ENCODE measurements at regions of chr6 and their contacts with region 1.

Region 1: DNA sequence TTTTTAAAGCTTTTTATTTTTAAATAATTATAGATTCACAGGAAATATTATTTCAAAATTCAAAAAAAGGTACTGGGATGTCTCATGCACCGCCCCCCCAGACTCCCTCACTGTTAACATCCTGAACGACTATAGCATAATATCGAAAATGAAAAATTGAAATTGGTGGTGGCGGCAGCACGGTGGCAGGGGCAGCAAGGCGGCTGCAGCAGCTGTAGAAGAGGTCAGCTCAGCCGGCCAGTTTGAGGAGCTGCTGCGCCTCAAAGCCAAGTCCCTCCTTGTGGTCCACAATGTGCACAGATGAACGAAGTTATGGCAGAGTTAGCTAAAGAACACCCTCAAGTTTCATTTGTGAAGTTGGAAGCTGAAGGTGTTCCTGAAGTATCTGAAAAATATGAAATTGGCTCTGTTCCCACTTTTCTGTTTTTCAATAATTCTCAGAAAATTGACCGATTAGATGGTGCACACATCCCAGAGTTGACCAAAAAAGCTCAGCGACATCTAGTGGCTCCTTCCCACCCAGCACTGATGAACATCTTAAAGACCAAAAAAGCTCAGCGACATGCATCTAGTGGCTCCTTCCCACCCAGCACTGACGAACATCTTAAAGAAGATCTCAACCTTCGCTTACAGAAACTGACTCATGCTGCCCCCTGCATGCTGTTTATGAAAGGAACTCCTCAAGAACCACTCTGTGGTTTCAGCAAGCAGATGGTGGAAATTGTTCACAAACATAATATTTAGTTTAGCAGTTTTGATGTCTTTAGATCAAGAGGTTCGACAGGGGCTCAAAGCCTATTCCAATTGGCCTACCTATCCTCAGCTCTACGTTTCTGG is 100.8 kb downstream of the FAM217A start:
- DNase-seq: peak; percentile 64
- H3K4me3 Mint-ChIP-seq: no peak overlapping the region
- H3K27ac Mint-ChIP-seq: no peak overlapping the region
- H3K4me1 Mint-ChIP-seq: peaks cover 6% of the 10 kb centered on the region
- H3K27me3 Mint-ChIP-seq: no peaks in the 10 kb centered on the region

Region 2: GRCh38 chr6:3742426-3743344 is 235.4 kb before region 1 on chr6:
- CTCF ChIA-PET with region 1: interaction called, 39 read pairs
- intact Hi-C with region 1: loop called (anchors 1 kb)
- DNase-seq: peak; percentile 94
- H3K4me3 Mint-ChIP-seq: no peak overlapping the region
- H3K27ac Mint-ChIP-seq: no peak overlapping the region
- H3K4me1 Mint-ChIP-seq: peaks cover 10% of the 10 kb centered on the region
- H3K27me3 Mint-ChIP-seq: peaks cover 9% of the 10 kb centered on the region

Region 3: GRCh38 chr6:3919130-3919628 is 58.9 kb before region 1 on chr6:
- CTCF ChIA-PET with region 1: interaction called, 5 read pairs
- intact Hi-C with region 1: loop called (anchors 2 kb)
- DNase-seq: no peak
- H3K4me3 Mint-ChIP-seq: no peak overlapping the region
- H3K27ac Mint-ChIP-seq: no peak overlapping the region
- H3K4me1 Mint-ChIP-seq: peaks cover 23% of the 10 kb centered on the region
- H3K27me3 Mint-ChIP-seq: peaks cover 7% of the 10 kb centered on the region

Region 4: DNA sequence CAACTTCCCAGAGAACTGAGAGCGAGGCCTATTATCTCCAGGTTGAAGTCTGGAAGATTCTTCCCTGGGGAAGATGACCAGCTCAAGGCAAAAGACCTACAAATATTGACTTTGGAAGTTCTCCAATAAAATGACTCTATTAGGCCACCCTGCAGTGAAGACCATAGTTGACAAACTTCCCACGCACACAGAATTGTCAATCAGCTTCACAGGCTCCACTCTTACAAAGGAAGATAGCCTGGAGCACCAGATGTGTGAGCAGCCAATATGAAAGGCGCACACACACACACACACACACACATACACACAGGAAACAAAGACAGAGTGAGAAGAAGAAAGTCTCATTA is 15.2 kb before region 1 on chr6:
- CTCF ChIA-PET with region 1: interaction called, 10 read pairs
- intact Hi-C with region 1: no loop called
- DNase-seq: no peak
- H3K4me3 Mint-ChIP-seq: no peak overlapping the region
- H3K27ac Mint-ChIP-seq: no peak overlapping the region
- H3K4me1 Mint-ChIP-seq: no peaks in the 10 kb centered on the region
- H3K27me3 Mint-ChIP-seq: no peaks in the 10 kb centered on the region

Region 5: GRCh38 chr6:3997177-3997770 is 19.2 kb after region 1 on chr6:
- CTCF ChIA-PET with region 1: interaction called, 12 read pairs
- intact Hi-C with region 1: no loop called
- DNase-seq: no peak
- H3K4me3 Mint-ChIP-seq: no peak overlapping the region
- H3K27ac Mint-ChIP-seq: no peak overlapping the region
- H3K4me1 Mint-ChIP-seq: peaks cover 8% of the 10 kb centered on the region
- H3K27me3 Mint-ChIP-seq: no peaks in the 10 kb centered on the region

Region 6: DNA sequence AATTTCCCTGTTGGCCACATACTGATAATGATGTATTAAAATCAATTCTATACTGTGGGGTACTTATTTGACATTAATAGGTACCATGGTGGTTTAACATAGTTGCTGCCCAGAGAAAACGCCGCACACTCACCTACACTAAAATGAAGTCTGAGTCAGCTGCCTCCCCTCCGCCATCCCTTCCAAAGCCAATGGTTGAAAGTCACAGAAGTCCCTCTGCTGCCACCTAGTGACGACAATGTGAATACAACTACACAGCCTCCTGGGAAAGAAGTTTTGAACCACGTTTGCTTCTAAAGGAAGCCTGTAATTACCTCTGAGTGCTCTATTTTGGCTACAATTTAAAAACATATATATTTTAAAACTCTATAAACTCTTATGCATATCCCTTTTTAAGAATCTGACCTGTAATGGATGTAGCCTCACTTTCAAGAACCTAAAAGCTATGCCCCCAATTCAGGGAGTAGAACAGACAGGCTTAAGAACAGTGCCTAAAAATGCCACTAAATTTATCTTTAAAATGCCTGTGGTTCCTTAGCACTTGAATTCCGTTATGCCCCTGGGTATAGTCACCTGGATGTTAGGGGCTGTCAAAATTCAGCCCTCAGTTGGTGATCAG is 177.9 kb after region 1 on chr6:
- CTCF ChIA-PET with region 1: interaction called, 4 read pairs
- intact Hi-C with region 1: loop called (anchors 1 kb)
- DNase-seq: peak; percentile 92
- H3K4me3 Mint-ChIP-seq: no peak overlapping the region
- H3K27ac Mint-ChIP-seq: no peak overlapping the region
- H3K4me1 Mint-ChIP-seq: peaks cover 6% of the 10 kb centered on the region
- H3K27me3 Mint-ChIP-seq: peaks cover 3% of the 10 kb centered on the region

Measured in activated naive CD4-positive, alpha-beta T cell treated with anti-CD3 and anti-CD28 coated beads for 36 hours (primary cell).